ENCODE measurements at regions of chr6 and their contacts with region 1.

Region 1: GRCh38 chr6:40654828-40655227 is 67.7 kb upstream of the LRFN2 start:
- DNase-seq: no peak
- ATAC-seq: no peak
- H3K4me3 ChIP-seq: no peak overlapping the region
- H3K27ac ChIP-seq: no peak overlapping the region
- H3K4me1 ChIP-seq: no peaks in the 10 kb centered on the region
- H3K27me3 ChIP-seq: peaks cover 57% of the 10 kb centered on the region
- CTCF ChIP-seq: no peak
- POLR2A ChIP-seq: no peak
- RAD21 ChIP-seq: no peak

Region 2: DNA sequence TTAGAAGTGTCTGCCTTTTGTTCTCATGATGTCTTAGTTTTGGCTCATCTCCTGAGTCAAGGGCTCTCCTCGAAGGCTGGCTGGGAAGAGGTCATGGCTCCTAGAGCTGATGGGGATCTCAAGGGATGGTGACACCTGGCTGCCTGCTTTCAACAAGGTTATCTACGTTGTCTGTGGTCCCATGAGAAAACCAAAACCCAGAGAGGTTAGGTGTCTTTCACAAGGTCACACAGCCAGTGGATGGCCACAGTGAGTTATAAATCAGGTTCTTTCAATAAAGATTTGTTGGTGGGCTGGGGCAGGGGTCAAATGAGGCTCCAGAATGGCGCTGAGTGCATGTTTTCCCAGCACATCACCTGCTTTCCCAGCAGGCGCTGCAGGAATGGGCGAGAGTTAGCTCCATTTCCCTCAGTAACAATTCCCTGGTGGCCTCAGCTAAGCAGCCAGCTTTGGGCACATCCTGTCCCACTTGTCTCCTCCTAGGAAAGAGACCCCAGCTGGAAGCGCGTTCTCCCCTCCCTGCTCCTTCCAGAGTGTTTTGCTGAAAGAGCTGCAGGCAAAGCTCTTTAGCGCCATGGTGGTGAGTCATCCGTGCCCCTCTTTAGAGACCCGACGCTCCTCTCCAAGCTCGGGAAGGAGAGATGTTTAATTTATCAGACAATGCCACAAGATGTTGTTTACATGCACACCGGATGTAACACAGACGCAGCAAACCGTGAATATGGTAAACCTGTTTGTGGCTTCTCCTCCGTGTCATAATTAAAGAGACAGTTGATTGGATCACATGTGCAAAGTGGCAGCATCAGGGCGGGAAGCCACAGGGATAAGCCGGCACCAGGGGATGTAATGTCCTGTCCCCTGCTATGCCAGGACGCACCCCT is 177.3 kb before region 1 on chr6:
- CTCF ChIA-PET with region 1: no interaction called
- POLR2A ChIA-PET with region 1: no interaction called
- RAD21 ChIA-PET with region 1: no interaction called
- intact Hi-C with region 1: no loop called
- DNase-seq: no peak
- ATAC-seq: no peak
- H3K4me3 ChIP-seq: no peak overlapping the region
- H3K27ac ChIP-seq: no peak overlapping the region
- H3K4me1 ChIP-seq: no peaks in the 10 kb centered on the region
- H3K27me3 ChIP-seq: peaks cover 47% of the 10 kb centered on the region
- CTCF ChIP-seq: no peak
- POLR2A ChIP-seq: no peak
- RAD21 ChIP-seq: no peak

Region 3: GRCh38 chr6:40678941-40679340 is 24.1 kb after region 1 on chr6:
- CTCF ChIA-PET with region 1: no interaction called
- POLR2A ChIA-PET with region 1: no interaction called
- RAD21 ChIA-PET with region 1: no interaction called
- intact Hi-C with region 1: loop called (anchors 1 kb)
- DNase-seq: no peak
- ATAC-seq: no peak
- H3K4me3 ChIP-seq: no peak overlapping the region
- H3K27ac ChIP-seq: no peak overlapping the region
- H3K4me1 ChIP-seq: no peaks in the 10 kb centered on the region
- H3K27me3 ChIP-seq: peaks cover 21% of the 10 kb centered on the region
- CTCF ChIP-seq: no peak
- POLR2A ChIP-seq: no peak
- RAD21 ChIP-seq: no peak